Posterior vena cava (tissue), 2 donors: ENCODE measurements at regions of chr2 and their contacts with region 1.

Region 1: GRCh38 chr2:30744823-30745222 is 62.4 kb downstream of the CAPN13 start:
- DNase-seq: no peak

Region 2: GRCh38 chr2:30565851-30566358 is 178.9 kb before region 1 on chr2:
- intact Hi-C with region 1: no loop called
- DNase-seq: no peak

Region 3: DNA sequence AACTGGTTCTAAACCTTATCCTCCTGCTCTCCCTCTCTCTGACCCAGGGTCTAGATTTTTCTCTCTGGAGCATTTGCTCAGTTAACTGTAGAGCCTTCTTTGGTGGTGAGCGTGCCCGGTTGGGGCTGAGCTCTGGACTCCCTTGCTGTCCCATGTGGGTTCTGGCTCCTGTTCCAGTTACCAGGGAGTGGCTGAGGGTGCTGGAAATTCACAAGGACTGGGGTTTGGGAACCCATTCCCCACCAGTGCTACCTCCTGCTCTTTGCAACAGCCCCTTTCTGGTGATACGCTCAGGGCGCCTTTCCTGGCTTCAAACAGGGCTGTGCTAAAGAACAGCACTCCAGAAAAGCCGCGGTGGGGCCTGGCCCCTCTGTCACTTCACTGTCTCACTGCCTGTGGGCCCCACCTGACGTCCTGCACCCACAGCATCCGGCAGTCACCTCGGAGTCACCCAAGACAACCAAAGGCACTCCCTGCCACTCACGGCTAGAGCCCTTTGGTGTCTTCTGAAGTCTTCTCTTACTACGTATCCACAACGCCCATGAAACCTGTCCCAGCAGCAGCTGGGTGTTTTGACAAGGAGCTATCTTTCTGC is 21.1 kb after region 1 on chr2:
- intact Hi-C with region 1: loop called in 1 of 2 experiments (anchors 1 kb)
- DNase-seq: peak; percentile 73